ENCODE measurements at regions of chr13 and their contacts with region 1.

Region 1: DNA sequence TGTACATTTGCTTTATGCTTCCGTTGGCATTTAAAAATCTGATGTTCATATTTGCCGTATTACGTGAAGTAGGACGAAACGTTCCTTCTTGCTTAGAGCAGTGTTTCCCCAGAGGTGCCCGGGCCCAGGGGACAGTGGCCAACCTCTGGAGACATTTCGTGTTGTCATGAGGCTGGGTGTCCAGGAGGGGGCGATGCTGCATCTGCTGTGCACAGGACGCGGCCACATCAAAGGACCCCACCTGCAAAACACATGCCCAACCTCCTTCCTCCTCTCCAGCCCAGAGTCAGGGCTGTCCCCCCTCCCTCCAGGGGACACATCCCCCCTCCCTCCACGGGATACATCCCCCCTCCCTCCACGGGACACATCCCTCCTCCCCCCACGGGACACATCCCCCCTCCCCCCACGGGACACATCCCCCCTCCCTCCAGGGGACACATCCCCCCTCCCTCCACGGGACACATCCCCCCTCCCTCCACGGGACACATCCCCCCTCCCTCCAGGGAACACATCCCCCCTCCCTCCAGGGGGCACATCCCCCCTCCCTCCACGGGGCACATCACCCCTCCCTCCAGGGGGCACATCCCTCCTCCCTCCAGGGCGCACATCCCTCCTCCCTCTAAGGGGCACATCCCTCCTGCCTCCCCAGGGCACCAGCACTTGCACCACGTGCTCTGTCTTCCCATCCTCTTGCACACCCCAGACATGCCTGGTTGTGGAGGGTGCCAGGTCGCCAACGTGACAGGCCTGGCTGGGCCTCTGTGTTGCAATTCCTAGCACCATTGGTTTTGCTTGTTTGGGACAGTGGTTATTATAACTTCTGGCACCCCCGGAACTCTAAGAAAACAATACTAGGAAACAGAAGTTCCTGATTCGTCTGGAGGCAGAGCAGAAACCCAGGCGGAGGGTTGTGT is 46.7 kb downstream of the GAS6 start:
- DNase-seq: peak; percentile 95
- ATAC-seq: peak; percentile 85
- H3K4me3 Mint-ChIP-seq: peak overlapping the region; percentile 96
- H3K27ac Mint-ChIP-seq: no peak overlapping the region
- H3K4me1 Mint-ChIP-seq: peaks cover 21% of the 10 kb centered on the region
- H3K27me3 Mint-ChIP-seq: no peaks in the 10 kb centered on the region

Region 2: DNA sequence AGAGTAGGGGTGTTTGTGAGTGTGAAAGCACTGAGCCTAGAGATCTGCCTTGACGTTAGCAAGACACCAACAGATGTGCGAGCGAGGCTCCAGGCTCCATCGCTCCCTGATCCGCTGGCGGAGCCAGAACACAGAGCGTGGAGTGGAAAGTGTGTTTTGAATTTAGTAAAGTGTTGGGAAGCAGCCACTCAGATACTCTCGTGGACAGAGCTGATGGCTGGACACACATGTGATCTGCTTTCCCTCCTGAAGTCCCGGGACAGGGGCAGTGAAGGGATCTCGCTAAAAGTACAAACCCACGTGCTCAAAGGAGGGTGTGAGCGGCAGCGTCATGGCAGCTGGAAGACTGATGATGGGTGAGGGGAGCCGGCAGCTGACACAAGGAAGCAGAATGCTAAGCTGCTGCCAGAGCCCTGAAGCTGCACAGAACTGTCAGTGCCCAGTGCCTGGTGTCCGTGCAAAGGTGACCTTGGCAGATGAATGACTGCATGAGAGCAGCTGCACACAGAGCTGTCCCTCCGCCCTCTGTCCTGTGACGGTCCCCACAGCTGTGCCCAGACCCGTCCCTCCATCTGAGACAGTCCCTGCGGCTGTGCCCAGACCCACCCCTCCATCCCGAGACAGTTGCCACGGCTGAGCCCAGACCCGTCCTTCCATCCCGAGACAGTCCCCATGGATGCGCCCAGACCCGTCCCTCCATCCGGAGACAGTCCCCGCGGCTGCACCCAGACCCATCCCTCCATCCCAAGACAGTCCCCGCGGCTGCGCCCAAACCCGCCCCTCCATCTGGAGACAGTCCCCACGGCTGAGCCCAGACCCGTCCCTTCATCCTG is 87.8 kb before region 1 on chr13:
- CTCF ChIA-PET with region 1: no interaction called
- POLR2A ChIA-PET with region 1: no interaction called
- intact Hi-C with region 1: no loop called
- DNase-seq: no peak
- ATAC-seq: no peak
- H3K4me3 Mint-ChIP-seq: no peak overlapping the region
- H3K27ac Mint-ChIP-seq: no peak overlapping the region
- H3K4me1 Mint-ChIP-seq: peaks cover 3% of the 10 kb centered on the region
- H3K27me3 Mint-ChIP-seq: peaks cover 10% of the 10 kb centered on the region

Region 3: DNA sequence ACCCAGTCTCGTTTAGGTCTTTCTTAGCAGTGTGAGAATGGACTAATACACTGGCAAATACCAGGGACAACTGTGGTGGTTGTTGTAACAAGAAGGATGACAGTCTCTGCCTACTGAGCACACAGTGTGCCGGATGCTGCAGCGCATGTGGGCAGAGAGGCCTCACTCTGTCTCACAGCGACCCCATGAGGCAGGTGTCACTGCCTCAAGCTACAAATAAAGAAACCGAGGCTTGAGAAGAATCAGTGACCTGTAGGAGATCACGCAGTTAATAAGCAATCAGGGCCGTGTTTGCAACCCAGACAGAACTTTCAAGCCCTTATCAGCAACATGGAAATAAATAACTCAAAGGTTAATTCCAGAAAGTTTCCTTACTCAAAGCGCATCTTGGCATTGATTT is 87.2 kb after region 1 on chr13:
- CTCF ChIA-PET with region 1: no interaction called
- POLR2A ChIA-PET with region 1: no interaction called
- intact Hi-C with region 1: loop called in 1 of 2 experiments (anchors 2 kb)
- DNase-seq: peak; percentile 58
- ATAC-seq: peak; percentile 58
- H3K4me3 Mint-ChIP-seq: no peak overlapping the region
- H3K27ac Mint-ChIP-seq: no peak overlapping the region
- H3K4me1 Mint-ChIP-seq: peaks cover 4% of the 10 kb centered on the region
- H3K27me3 Mint-ChIP-seq: peaks cover 13% of the 10 kb centered on the region

Region 4: GRCh38 chr13:114164053-114164452 is 346.9 kb after region 1 on chr13:
- CTCF ChIA-PET with region 1: no interaction called
- POLR2A ChIA-PET with region 1: no interaction called
- intact Hi-C with region 1: no loop called
- DNase-seq: no peak
- ATAC-seq: no peak
- H3K4me3 Mint-ChIP-seq: no peak overlapping the region
- H3K27ac Mint-ChIP-seq: no peak overlapping the region
- H3K4me1 Mint-ChIP-seq: peaks cover 78% of the 10 kb centered on the region
- H3K27me3 Mint-ChIP-seq: no peaks in the 10 kb centered on the region

Region 5: DNA sequence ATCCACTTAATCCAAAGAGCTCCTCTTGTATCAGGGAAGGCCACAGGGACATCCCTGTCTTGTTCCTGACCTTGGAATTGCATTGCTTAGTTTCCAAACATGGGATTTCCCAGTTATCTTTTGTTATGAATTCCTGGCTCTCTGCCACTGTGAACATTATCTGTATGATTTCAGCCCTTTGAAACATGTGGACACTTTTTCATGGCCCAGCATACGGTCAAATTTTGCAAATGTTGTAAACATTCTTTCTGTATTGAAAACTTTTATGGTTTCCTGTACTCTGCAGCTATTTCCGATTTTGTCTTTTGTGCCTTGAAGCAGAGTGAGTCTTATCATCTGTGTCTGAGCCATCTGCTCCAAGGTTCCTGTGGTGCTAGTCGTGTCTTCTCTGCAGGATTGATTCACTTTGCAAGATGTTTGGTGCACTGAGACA is 357.3 kb after region 1 on chr13:
- CTCF ChIA-PET with region 1: no interaction called
- POLR2A ChIA-PET with region 1: no interaction called
- intact Hi-C with region 1: no loop called
- DNase-seq: no peak
- ATAC-seq: no peak
- H3K4me3 Mint-ChIP-seq: no peak overlapping the region
- H3K27ac Mint-ChIP-seq: no peak overlapping the region
- H3K4me1 Mint-ChIP-seq: peaks cover 26% of the 10 kb centered on the region
- H3K27me3 Mint-ChIP-seq: no peaks in the 10 kb centered on the region

Measured in activated CD4-positive, alpha-beta T cell treated with anti-CD3 and anti-CD28 coated beads for 36 hours (primary cell).